ENCODE measurements at regions of chr1 and their contacts with region 1.

Region 1: GRCh38 chr1:198096390-198096789 is 60.4 kb upstream of the NEK7 start:
- DNase-seq: no peak
- H3K4me3 ChIP-seq: no peak overlapping the region
- H3K27ac ChIP-seq: no peak overlapping the region
- H3K4me1 ChIP-seq: no peaks in the 10 kb centered on the region
- H3K27me3 ChIP-seq: no peaks in the 10 kb centered on the region
- CTCF ChIP-seq: no peak
- POLR2A ChIP-seq: no peak

Region 2: GRCh38 chr1:198135376-198135775 is 39.0 kb after region 1 on chr1:
- intact Hi-C with region 1: loop called (anchors 5 kb)
- DNase-seq: no peak
- H3K4me3 ChIP-seq: no peak overlapping the region
- H3K27ac ChIP-seq: no peak overlapping the region
- H3K4me1 ChIP-seq: no peaks in the 10 kb centered on the region
- H3K27me3 ChIP-seq: no peaks in the 10 kb centered on the region
- CTCF ChIP-seq: no peak
- POLR2A ChIP-seq: no peak